CD14-positive monocyte (primary cell): ENCODE measurements at regions of chr22 and their contacts with region 1.

Region 1: GRCh38 chr22:44026630-44027511 is 2.8 kb downstream of the PARVB start:
- DNase-seq: peak; percentile 97 to 100 (median 98)
- H3K4me3 ChIP-seq: peak overlapping the region; percentile 15 to 74 (median 37)
- H3K4me3 Mint-ChIP-seq: peak overlapping the region; percentile 83 to 89
- H3K27ac ChIP-seq: peak overlapping the region; percentile 98 to 99
- H3K27ac Mint-ChIP-seq: peak overlapping the region; percentile 100
- H3K4me1 ChIP-seq: peaks cover 56 to 59% of the 10 kb centered on the region in 2 donors
- H3K4me1 Mint-ChIP-seq: peaks cover 57% of the 10 kb centered on the region
- H3K27me3 ChIP-seq: no peaks in the 10 kb centered on the region
- H3K27me3 Mint-ChIP-seq: peaks cover 0 to 6% (median 0%) of the 10 kb centered on the region in 3 donors
- CTCF ChIP-seq: no peak

Region 2: DNA sequence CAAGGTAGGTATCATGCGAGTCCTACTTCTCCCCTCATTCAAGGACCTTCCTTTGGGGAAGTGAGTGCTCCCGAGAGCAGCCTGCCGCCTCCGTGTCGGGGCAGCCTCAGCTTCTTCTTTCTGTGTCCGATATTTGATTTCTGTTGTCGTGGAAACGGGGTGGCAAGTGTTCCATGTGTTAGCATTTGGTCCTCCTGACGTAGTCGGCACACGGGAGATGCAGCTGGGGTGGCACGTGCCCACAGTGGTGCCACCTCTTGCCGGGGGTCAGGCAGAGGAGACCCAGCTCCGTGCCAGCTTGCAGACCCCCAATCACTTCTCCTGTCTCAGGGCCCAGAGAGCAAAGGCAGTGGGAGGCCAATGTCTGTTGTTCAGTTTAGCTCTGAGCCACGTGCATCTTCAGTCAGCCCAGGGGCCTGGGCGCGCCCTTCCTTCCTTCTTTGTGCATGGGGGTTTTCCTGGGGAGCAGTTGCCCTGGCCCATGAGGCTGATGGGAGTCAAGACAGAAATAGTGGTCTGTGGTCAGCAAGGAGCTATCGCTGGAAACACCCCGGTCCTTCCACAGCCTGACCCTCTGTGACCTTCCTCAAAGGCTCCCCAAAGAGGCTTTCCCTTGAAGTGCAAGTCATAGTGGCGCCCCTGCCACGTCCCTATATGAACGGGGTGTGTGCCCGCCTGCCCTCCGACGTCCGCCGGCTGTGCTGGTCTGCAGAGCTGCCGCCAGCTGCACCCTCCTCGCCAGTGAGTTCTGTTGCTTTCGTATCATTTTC is 41.7 kb after region 1 on chr22:
- intact Hi-C with region 1: loop called (anchors 1 kb)
- DNase-seq: peak; percentile 95 to 99 (median 98)
- H3K4me3 ChIP-seq: peak overlapping the region in 1 of 3 experiments; percentile 52
- H3K4me3 Mint-ChIP-seq: peak overlapping the region; percentile 69 to 88
- H3K27ac ChIP-seq: peak overlapping the region; percentile 94 to 97
- H3K27ac Mint-ChIP-seq: peak overlapping the region; percentile 98 to 100 (median 100)
- H3K4me1 ChIP-seq: peaks cover 33 to 35% of the 10 kb centered on the region in 2 donors
- H3K4me1 Mint-ChIP-seq: peaks cover 42% of the 10 kb centered on the region
- H3K27me3 ChIP-seq: no peaks in the 10 kb centered on the region
- H3K27me3 Mint-ChIP-seq: peaks cover 5 to 7% (median 5%) of the 10 kb centered on the region in 3 donors
- CTCF ChIP-seq: no peak

Region 3: GRCh38 chr22:44107340-44107739 is 80.5 kb after region 1 on chr22:
- intact Hi-C with region 1: no loop called
- DNase-seq: no peak
- H3K4me3 ChIP-seq: no peak overlapping the region
- H3K4me3 Mint-ChIP-seq: no peak overlapping the region
- H3K27ac ChIP-seq: no peak overlapping the region
- H3K27ac Mint-ChIP-seq: no peak overlapping the region
- H3K4me1 ChIP-seq: no peaks in the 10 kb centered on the region
- H3K4me1 Mint-ChIP-seq: no peaks in the 10 kb centered on the region
- H3K27me3 ChIP-seq: no peaks in the 10 kb centered on the region
- H3K27me3 Mint-ChIP-seq: peaks cover 0 to 1% (median 0%) of the 10 kb centered on the region in 3 donors
- CTCF ChIP-seq: no peak

Region 4: GRCh38 chr22:44172370-44173108 is 145.7 kb after region 1 on chr22:
- intact Hi-C with region 1: loop called in 1 of 2 experiments (anchors 2 kb)
- DNase-seq: peak; percentile 92 to 95 (median 93)
- H3K4me3 ChIP-seq: peak overlapping the region in 1 of 3 experiments; percentile 56
- H3K4me3 Mint-ChIP-seq: peak overlapping the region; percentile 64 to 68
- H3K27ac ChIP-seq: peak overlapping the region; percentile 87 to 88
- H3K27ac Mint-ChIP-seq: peak overlapping the region; percentile 96 to 99 (median 99)
- H3K4me1 ChIP-seq: peaks cover 44 to 46% of the 10 kb centered on the region in 2 donors
- H3K4me1 Mint-ChIP-seq: peaks cover 38% of the 10 kb centered on the region
- H3K27me3 ChIP-seq: no peaks in the 10 kb centered on the region
- H3K27me3 Mint-ChIP-seq: peaks cover 0 to 2% (median 2%) of the 10 kb centered on the region in 3 donors
- CTCF ChIP-seq: no peak